Mammary epithelial cell (primary cell): ENCODE measurements at regions of chr18 and their contacts with region 1.

Region 1: GRCh38 chr18:79714531-79715240 is 35.1 kb downstream of the CTDP1 start:
- DNase-seq: no peak
- H3K4me3 ChIP-seq: no peak overlapping the region
- H3K27ac ChIP-seq: no peak overlapping the region
- H3K4me1 ChIP-seq: no peaks in the 10 kb centered on the region
- H3K27me3 ChIP-seq: no peaks in the 10 kb centered on the region
- CTCF ChIP-seq: no peak

Region 2: DNA sequence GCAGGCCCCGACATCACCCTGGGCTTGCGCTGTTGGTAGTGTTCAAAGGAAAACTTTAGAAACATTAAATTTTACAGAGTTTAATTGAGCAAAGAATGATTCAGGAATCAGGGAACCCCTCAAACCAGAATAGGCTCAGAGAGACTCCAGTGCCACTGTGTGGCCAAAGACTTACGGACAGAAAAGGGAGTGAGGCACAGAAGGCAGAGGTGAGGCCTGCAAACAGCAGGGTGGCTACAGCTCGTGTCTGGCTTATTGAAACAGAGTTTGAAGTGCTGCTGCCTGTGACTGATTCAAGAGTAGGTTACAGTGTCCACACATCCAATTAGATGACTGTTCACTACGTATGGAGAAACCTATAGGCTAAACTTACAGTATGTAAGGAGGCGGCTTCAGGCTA is 37.5 kb before region 1 on chr18:
- CTCF ChIA-PET with region 1: no interaction called
- dilution Hi-C with region 1: no loop called
- in situ Hi-C with region 1: no loop called
- intact Hi-C with region 1: no loop called
- DNase-seq: no peak
- H3K4me3 ChIP-seq: no peak overlapping the region
- H3K27ac ChIP-seq: no peak overlapping the region
- H3K4me1 ChIP-seq: peaks cover 22% of the 10 kb centered on the region
- H3K27me3 ChIP-seq: no peaks in the 10 kb centered on the region
- CTCF ChIP-seq: no peak

Region 3: GRCh38 chr18:79819968-79820351 is 105.3 kb after region 1 on chr18:
- CTCF ChIA-PET with region 1: no interaction called
- dilution Hi-C with region 1: loop called (anchors 5 kb)
- in situ Hi-C with region 1: no loop called
- intact Hi-C with region 1: no loop called
- DNase-seq: peak; percentile 0
- H3K4me3 ChIP-seq: no peak overlapping the region
- H3K27ac ChIP-seq: no peak overlapping the region
- H3K4me1 ChIP-seq: no peaks in the 10 kb centered on the region
- H3K27me3 ChIP-seq: peaks cover 4% of the 10 kb centered on the region
- CTCF ChIP-seq: no peak